ENCODE measurements at regions of chr1 and their contacts with region 1.

Region 1: GRCh38 chr1:185156854-185157598 is at the starts of genes SWT1 and TRMT1L:
- DNase-seq: peak; percentile 99
- H3K4me3 Mint-ChIP-seq: peak within 1 kb of the TSS; percentile 98
- H3K27ac Mint-ChIP-seq: peak within 1 kb of the TSS; percentile 98
- H3K4me1 Mint-ChIP-seq: peaks cover 55% of the 10 kb centered on the region
- H3K27me3 Mint-ChIP-seq: no peaks in the 10 kb centered on the region
- total RNA-seq, gene SWT1: 1.4 and 1.8 TPM in 2 replicates
- total RNA-seq, gene TRMT1L: 22.4 and 26.0 TPM in 2 replicates

Region 2: GRCh38 chr1:184163674-184164465 is 993.2 kb before region 1 on chr1:
- intact Hi-C with region 1: loop called (anchors 2 kb)
- DNase-seq: peak; percentile 61
- H3K4me3 Mint-ChIP-seq: no peak overlapping the region
- H3K27ac Mint-ChIP-seq: no peak overlapping the region
- H3K4me1 Mint-ChIP-seq: peaks cover 16% of the 10 kb centered on the region
- H3K27me3 Mint-ChIP-seq: peaks cover 2% of the 10 kb centered on the region

Region 3: GRCh38 chr1:184854496-184855140 is 302.4 kb before region 1 on chr1:
- intact Hi-C with region 1: no loop called
- DNase-seq: no peak
- H3K4me3 Mint-ChIP-seq: no peak overlapping the region
- H3K27ac Mint-ChIP-seq: no peak overlapping the region
- H3K4me1 Mint-ChIP-seq: peaks cover 2% of the 10 kb centered on the region
- H3K27me3 Mint-ChIP-seq: peaks cover 1% of the 10 kb centered on the region

Region 4: DNA sequence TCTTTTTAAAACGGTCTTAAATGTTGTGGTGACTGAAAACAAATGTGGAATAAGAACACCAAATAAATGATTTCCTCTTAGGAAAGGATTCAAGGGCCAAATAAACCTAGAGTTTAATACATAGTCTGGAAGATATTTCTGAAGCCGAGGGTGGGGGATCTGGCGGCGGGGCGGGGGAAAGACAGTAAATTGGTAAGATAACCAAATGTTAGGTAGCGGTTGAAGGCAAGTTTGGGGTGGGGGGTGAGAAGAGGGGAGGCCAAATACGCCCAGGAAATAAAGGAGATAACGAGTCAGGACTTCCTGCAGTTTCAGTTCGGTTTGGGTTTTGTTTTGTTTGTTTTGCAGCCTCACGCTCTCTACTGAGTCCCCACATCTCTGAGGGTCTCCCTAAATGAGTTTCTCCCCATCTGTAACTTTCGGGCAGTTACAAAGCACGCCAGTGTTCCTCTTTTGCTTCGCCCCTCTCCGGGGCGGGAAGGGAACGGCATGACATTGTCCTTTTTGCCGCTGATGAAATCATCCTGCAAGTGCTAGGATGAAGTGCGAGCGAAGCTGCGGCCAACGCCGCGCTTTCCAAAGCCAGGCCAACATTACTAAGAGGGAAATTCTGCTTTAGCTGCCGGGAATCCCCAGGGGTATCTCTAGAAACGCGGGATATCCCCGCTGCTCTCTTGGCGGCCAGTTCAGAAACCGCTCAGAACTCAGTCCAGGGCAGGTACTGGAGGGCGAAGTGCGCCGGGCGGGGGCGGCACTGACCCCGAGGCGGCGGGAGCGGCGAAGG is 183.6 kb before region 1 on chr1:
- intact Hi-C with region 1: loop called (anchors 2 kb)
- DNase-seq: no peak
- H3K4me3 Mint-ChIP-seq: peak overlapping the region; percentile 91
- H3K27ac Mint-ChIP-seq: peak overlapping the region; percentile 94
- H3K4me1 Mint-ChIP-seq: peaks cover 56% of the 10 kb centered on the region
- H3K27me3 Mint-ChIP-seq: peaks cover 19% of the 10 kb centered on the region

Region 5: DNA sequence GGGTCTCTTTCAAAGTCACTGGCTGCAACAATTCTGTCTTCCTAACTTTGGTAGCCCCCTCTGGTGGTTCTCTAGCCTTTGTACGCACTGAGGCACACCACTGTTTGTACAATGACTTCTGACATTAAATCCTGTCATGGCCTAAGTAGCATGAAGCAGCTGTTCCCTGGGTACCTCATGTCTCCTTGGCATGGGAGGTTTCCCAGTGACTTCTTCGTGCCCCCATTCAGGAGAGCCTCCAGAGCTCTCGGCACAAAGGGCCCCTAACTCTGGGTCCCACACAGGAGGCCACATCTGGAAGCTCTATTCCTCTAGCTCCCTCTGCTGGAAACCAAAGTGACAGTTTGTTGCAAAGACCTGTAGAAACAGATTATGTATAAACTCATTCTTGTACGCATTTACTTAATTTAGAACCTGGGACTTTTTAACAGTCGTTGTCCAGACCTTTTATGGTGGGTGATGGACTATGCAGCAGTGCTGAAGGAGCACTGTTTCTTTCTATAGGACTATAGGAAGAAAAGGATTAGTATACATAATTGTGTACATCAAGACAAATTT is 13.3 kb after region 1 on chr1:
- intact Hi-C with region 1: loop called (anchors 2 kb)
- DNase-seq: peak; percentile 85
- H3K4me3 Mint-ChIP-seq: no peak overlapping the region
- H3K27ac Mint-ChIP-seq: no peak overlapping the region
- H3K4me1 Mint-ChIP-seq: peaks cover 9% of the 10 kb centered on the region
- H3K27me3 Mint-ChIP-seq: no peaks in the 10 kb centered on the region

Region 6: GRCh38 chr1:185267301-185267700 is 110.3 kb after region 1 on chr1:
- intact Hi-C with region 1: no loop called
- DNase-seq: no peak
- H3K4me3 Mint-ChIP-seq: no peak overlapping the region
- H3K27ac Mint-ChIP-seq: no peak overlapping the region
- H3K4me1 Mint-ChIP-seq: peaks cover under 1% of the 10 kb centered on the region
- H3K27me3 Mint-ChIP-seq: no peaks in the 10 kb centered on the region

Region 7: DNA sequence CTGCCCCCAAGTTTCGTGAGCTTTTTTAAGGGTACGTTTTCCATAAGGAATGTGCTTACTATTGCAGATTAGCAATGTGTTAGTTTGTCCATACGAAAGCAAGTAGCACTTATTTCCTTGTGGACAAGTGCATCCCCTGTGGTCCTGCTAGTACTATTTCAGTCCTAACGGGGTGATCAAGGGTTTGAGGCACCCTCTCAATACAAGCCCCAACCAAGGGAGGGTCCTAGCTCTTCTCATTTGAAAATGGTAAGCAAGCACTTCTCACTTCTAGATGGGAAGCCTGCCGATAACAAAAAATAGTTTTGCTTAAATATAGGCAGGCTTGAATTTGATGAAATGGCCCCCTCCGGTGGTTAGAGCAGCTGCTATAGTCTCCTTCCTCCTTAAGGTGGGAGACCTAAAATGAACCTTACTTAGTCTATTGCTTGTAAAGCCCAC is 513.2 kb after region 1 on chr1:
- intact Hi-C with region 1: loop called (anchors 5 kb)
- DNase-seq: peak; percentile 84
- H3K4me3 Mint-ChIP-seq: no peak overlapping the region
- H3K27ac Mint-ChIP-seq: no peak overlapping the region
- H3K4me1 Mint-ChIP-seq: peaks cover 24% of the 10 kb centered on the region
- H3K27me3 Mint-ChIP-seq: no peaks in the 10 kb centered on the region